ENCODE measurements at regions of chr10 and their contacts with region 1.

Region 1: DNA sequence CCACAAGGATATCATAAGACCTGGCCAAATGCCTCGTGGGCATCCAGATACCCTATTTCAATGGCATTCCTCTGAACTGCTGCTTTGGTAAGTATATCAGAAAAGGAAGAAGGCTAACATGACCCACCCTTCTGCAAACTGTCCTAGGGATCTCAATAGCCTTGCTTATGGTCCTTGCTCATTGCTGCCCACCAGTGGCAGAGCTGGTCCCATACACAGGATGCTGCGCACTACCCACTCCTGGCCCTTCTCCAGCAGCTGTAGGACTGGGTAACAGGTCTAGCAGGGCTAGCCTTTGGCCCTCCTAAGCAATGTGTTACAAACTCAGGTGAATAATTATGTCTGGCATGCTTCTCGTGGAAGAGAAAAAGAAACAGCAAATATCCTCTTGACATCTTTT is 72.5 kb downstream of the C10orf90 start:
- DNase-seq: peak; percentile 76
- ATAC-seq: peak; percentile 94
- H3K4me3 Mint-ChIP-seq: no peak overlapping the region
- H3K27ac Mint-ChIP-seq: no peak overlapping the region
- H3K4me1 Mint-ChIP-seq: peaks cover 24% of the 10 kb centered on the region
- H3K27me3 Mint-ChIP-seq: no peaks in the 10 kb centered on the region; the same call in 1 of the 2 replicates
- CTCF ChIP-seq: peak; percentile 70

Region 2: DNA sequence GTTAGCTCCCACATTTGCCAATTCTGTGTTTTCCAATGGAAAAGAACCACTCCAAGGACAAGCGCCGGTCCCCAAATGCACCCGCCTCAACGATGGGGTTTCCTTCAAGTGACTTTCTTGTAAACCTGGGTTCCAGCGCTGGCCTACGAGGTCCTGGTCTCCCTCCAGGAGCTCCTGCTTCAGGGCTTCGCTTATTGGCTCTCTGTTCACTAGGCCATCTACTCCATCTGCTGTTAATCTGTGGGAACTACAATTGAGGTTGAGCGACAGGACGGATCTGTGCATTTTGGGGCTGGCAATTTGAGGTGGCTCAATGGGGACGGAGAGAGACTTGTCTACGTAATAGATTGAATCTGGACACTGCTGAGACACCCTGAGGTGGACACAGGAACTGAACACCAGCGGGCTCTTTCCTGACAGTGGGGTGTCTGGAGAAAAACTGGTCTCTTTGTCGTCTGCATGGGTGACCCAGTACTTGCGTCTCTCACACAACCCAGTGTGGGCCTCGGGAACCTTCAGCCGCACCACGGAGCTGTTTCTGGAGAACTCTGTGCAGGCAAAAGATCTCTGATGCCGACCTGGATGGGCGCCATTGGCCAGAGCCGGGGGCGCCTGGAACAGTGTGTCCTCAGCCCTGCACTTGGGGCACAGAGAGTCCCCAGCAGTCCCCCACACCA is 93.8 kb before region 1 on chr10:
- CTCF ChIA-PET with region 1: interaction called, 17 read pairs
- POLR2A ChIA-PET with region 1: no interaction called
- DNase-seq: peak; percentile 48
- ATAC-seq: peak; percentile 99
- H3K4me3 Mint-ChIP-seq: no peak overlapping the region
- H3K27ac Mint-ChIP-seq: no peak overlapping the region
- H3K4me1 Mint-ChIP-seq: no peaks in the 10 kb centered on the region
- H3K27me3 Mint-ChIP-seq: no peaks in the 10 kb centered on the region
- CTCF ChIP-seq: peak; percentile 45; the same call in 1 of the 2 replicates

Region 3: DNA sequence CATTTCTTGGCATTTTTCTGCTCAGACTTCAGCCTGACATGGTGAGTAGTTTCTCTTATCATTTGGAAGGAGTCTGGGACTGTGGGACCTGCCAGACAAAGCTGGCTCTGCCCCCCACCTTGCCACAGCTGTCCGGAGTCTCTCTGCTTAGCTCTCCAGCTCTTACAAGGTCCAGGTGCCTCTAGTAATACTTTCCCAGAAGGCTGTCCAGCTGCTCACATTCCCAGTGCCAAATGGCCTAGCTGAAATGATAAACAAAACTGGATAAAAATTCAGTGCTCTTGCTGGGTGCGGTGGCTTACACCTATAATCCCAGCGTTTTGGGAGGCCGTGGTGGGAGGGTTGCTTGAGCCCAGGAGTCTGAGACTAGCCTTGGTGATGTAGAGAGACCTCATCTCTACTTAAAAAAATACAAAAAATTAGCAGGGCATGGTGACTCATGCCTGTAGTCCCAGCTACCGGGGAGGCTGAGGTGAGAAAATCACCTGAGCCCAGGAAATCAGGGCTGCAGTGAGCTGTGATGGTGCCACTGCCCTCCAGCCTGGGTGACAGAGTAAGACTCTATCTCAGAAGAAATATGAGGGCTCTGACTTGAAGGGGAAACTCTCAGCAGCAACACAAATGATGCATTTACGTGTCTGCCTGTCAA is 14.3 kb before region 1 on chr10:
- CTCF ChIA-PET with region 1: interaction called, 10 read pairs
- POLR2A ChIA-PET with region 1: no interaction called
- DNase-seq: no peak
- ATAC-seq: no peak
- H3K4me3 Mint-ChIP-seq: no peak overlapping the region
- H3K27ac Mint-ChIP-seq: no peak overlapping the region
- H3K4me1 Mint-ChIP-seq: peaks cover 35% of the 10 kb centered on the region
- H3K27me3 Mint-ChIP-seq: no peaks in the 10 kb centered on the region; the same call in 1 of the 2 replicates
- CTCF ChIP-seq: no peak

Region 4: DNA sequence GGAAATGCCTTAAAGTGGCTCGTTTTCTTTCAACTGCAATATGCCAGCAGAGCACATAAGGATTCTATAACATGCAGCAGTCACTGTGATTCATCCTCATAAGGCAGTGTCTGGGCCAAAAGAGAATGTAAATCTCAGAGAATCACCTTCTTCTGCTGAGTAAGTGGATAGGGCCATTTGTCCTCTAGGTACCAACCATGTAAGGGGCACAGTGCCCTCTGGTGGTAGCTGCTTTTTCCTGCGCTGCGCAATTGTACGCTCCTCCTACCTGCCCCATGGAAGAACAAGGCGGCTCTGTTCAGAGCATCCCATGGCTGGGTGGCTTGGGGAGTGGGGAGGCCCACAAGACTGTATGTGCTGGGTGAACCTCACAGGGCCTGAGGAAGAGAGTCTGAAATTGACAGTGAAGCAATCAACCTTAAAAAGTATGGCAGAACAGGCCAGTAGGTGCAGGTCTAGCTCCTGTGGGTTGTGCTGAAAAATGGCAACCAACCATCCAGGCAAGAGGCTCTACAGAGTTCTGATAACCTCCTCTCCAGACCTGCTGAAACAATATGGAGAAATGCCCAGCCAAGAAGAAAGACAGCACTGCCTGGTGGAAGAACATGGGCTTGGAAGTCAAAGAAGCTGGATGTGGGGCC is 151.1 kb after region 1 on chr10:
- CTCF ChIA-PET with region 1: interaction called, 13 read pairs
- POLR2A ChIA-PET with region 1: no interaction called
- DNase-seq: peak; percentile 92
- ATAC-seq: peak; percentile 99
- H3K4me3 Mint-ChIP-seq: no peak overlapping the region
- H3K27ac Mint-ChIP-seq: no peak overlapping the region
- H3K4me1 Mint-ChIP-seq: peaks cover 2% of the 10 kb centered on the region; the same call in 1 of the 2 replicates
- H3K27me3 Mint-ChIP-seq: no peaks in the 10 kb centered on the region
- CTCF ChIP-seq: peak; percentile 74

Measured in WTC11 (cell line).